HEK293T (cell line): ENCODE measurements at regions of chr1 and their contacts with region 1.

Region 1: GRCh38 chr1:85061711-85062424 is 13.6 kb upstream of the MCOLN3 start:
- DNase-seq: peak; percentile 99

Region 2: GRCh38 chr1:85048296-85049064 is 13.4 kb before region 1 on chr1 and contains the start of gene MCOLN3:
- CTCF ChIA-PET with region 1: interaction called, 3 read pairs
- POLR2A ChIA-PET with region 1: interaction called, 12 read pairs
- DNase-seq: peak; percentile 71

Region 3: GRCh38 chr1:85351202-85351828 is 289.4 kb after region 1 on chr1:
- CTCF ChIA-PET with region 1: no interaction called
- POLR2A ChIA-PET with region 1: no interaction called
- DNase-seq: no peak